Heart right ventricle (tissue), 16 donors: ENCODE measurements at regions of chr9 and their contacts with region 1.

Region 1: GRCh38 chr9:119157196-119157595 is 212.0 kb downstream of the BRINP1 start:
- DNase-seq: no peak
- ATAC-seq: no peak
- H3K4me3 ChIP-seq: no peak overlapping the region
- H3K27ac ChIP-seq: no peak overlapping the region
- H3K4me1 ChIP-seq: no peaks in the 10 kb centered on the region
- H3K27me3 ChIP-seq: no peaks in the 10 kb centered on the region
- CTCF ChIP-seq: no peak

Region 2: GRCh38 chr9:118882684-118883083 is 274.5 kb before region 1 on chr9:
- intact Hi-C with region 1: loop called in 1 of 10 experiments (anchors 10 kb)
- DNase-seq: no peak
- ATAC-seq: no peak
- H3K4me3 ChIP-seq: no peak overlapping the region
- H3K27ac ChIP-seq: no peak overlapping the region
- H3K4me1 ChIP-seq: no peaks in the 10 kb centered on the region
- H3K27me3 ChIP-seq: no peaks in the 10 kb centered on the region
- CTCF ChIP-seq: no peak

Region 3: DNA sequence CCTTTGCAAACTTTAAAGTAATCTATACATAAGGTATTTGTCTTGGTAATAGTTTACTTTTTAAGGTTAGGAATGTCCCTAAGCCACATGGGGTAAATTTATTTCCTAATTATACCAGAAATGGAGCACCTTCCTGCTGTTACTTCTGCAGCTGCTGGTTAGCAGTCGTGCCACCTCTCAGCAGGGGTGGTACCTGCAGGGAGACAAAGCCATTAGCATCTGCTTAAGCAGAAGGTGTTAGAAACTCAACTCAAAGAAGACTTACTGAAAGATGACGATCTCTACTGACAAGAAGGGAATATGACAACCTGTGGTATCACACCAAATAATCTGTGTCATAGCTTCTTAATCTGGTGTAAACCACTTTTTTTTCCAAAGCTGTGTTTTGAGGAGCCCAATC is 38.3 kb after region 1 on chr9:
- intact Hi-C with region 1: no loop called
- DNase-seq: no peak
- ATAC-seq: no peak
- H3K4me3 ChIP-seq: no peak overlapping the region
- H3K27ac ChIP-seq: no peak overlapping the region
- H3K4me1 ChIP-seq: no peaks in the 10 kb centered on the region
- H3K27me3 ChIP-seq: no peaks in the 10 kb centered on the region
- CTCF ChIP-seq: no peak